Activated T-helper 1 cell treated with anti-CD3 and anti-CD28 coated beads, Interleukin-12 subunit alpha, Interleukin-12 subunit beta, Interleukin-2, Interleukin-4 antibody, amounts not matched to agents 30 ng/mL and 10 ng/mL and 1 ng/mL, durations not matched to agents 14 hours and 24 hours and 36 hours (primary cell): ENCODE measurements at regions of chr1 and their contacts with region 1.

Region 1: DNA sequence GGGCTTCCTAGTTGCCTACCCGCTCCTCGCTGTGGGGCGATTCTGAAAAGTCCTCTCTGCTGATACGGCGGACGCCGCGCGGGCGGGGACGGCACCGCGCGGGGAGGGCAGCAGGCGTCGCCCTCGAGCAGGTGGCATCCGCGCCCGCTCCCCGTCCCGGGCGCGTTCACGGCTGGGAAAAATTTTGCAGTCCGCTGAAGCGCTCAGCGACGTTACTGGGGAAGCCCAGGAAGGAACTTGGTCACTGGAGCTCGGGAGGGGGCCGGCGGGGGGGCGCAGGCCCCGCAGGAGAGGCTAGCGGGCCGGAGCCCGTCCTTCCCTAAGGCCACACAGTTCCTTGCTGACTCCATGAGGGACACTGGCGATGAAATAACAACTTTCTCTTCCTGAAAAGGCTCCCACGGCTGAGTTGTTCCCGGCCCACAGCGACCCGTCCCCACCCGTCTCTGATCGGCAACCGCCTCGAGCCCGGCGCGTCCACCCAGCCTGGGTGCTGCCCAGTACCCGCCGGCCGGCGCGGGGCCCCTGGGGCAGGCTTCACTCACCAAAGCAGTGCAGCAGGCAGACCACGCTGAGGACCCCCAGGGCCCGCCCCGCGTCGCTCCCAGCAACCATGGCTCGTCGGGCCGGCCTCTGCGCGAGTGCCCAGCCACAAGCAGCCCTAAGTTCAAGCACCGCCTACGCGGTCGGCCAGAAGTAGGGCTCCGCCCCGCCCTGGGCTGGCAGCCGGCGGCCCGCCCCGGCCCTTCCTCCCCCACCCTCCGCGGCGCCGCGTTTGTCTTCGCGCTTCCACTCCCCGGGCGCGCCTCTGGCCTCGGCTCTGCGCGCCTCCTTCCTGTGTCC is at the start of gene CD58:
- DNase-seq: peak; percentile 81
- H3K4me3 Mint-ChIP-seq: peak within 1 kb of the TSS; percentile 90
- H3K27ac Mint-ChIP-seq: peak within 1 kb of the TSS; percentile 90
- H3K4me1 Mint-ChIP-seq: peaks cover 74% of the 10 kb centered on the region
- H3K27me3 Mint-ChIP-seq: no peaks in the 10 kb centered on the region
- total RNA-seq, gene CD58: 35.3 and 37.8 TPM in 2 replicates

Region 2: DNA sequence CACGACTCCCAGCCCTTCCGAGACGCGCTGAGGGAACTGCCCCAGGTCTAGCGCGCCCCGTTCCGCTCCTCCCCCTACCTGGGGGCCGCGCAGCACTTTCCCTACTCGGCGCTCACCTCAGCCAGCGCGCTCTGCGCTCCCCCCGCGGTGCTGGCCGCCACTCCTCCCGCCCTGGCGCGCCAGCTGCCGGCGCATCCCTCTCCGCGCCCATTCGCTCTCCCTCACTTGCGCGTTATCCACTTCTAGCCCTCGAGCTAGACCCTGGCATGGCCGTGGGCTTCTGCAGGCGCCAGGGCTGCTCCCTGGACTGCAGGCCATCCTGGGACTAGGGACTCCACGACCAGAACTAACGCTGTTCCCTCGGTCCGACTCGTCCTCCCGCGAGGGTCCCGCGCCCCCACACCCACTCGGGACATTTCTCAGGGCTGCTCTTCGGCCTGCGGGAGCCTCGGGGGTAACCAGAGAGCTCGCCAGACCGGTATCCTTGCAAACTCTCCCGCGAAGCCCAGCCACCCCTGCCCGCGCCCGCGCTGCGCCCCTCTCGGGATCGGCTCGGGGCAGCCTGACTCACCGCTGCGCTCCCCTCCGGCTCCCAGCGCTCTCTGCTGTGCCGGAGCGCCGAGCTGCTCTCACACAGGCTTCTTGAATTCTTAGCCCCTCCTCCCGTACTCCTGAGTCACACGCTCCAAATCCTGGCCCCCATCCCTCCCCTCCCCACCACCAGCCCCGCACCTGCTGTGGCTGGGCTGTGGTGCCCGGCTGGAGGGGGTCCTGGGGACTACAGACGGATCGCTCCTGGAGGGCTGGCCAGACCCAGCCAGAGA is 1232.7 kb before region 1 on chr1 and contains the start of gene NGF:
- intact Hi-C with region 1: no loop called
- DNase-seq: no peak
- H3K4me3 Mint-ChIP-seq: no peak within 1 kb of the TSS
- H3K27ac Mint-ChIP-seq: no peak within 1 kb of the TSS
- H3K4me1 Mint-ChIP-seq: no peaks in the 10 kb centered on the region
- H3K27me3 Mint-ChIP-seq: peaks cover 22% of the 10 kb centered on the region
- total RNA-seq, gene NGF: not detected in 2 replicates

Region 3: GRCh38 chr1:116504308-116505156 is 66.0 kb before region 1 on chr1:
- intact Hi-C with region 1: loop called (anchors 1 kb)
- DNase-seq: peak; percentile 86
- H3K4me3 Mint-ChIP-seq: peak overlapping the region; percentile 3
- H3K27ac Mint-ChIP-seq: peak overlapping the region; percentile 88
- H3K4me1 Mint-ChIP-seq: peaks cover 91% of the 10 kb centered on the region
- H3K27me3 Mint-ChIP-seq: no peaks in the 10 kb centered on the region

Region 4: GRCh38 chr1:116556289-116557006 is 14.1 kb before region 1 on chr1:
- intact Hi-C with region 1: loop called (anchors 1 kb)
- DNase-seq: peak; percentile 67
- H3K4me3 Mint-ChIP-seq: peak overlapping the region; percentile 9
- H3K27ac Mint-ChIP-seq: peak overlapping the region; percentile 77
- H3K4me1 Mint-ChIP-seq: peaks cover 86% of the 10 kb centered on the region
- H3K27me3 Mint-ChIP-seq: no peaks in the 10 kb centered on the region

Region 5: DNA sequence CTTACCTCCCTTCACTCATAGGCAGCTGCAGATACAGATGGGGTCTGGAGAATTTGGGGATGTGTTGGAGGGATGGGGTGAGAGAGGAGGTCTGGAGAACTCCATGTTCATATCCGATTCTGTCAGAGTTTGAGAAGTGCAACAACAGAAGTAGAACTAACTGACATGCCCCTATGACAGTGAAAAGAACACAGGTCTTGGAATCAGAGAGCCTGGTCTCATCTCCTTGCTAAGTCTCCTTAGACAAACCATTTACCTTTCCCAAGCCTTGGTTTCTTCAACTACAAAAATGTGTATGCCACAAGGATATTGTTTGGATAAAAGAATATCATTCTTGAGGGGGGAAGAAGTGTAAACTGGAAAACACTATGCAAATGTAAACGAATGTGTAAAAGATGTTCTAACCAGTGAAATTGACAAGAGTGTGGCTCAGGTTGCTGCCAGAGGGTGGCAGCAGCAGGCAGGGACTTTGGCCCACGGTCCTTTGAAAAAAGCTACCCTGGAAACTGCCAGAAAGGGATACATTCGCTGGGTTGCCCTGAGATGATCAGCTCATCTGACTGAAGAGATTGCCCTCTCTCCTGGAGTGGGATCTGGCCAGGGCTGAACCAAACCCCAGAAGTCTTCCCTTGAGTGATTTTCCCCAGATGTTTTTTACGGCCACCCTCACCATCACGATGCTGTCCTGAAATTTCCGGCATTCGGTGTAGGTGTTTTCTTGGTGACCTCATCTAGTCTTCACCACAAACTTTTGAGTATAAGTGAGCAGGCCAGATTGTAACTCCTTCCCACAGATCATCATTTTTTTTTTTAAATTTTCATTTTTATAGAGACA is 166.7 kb after region 1 on chr1:
- intact Hi-C with region 1: loop called (anchors 1 kb)
- DNase-seq: peak; percentile 70
- H3K4me3 Mint-ChIP-seq: peak overlapping the region; percentile 66
- H3K27ac Mint-ChIP-seq: peak overlapping the region; percentile 99
- H3K4me1 Mint-ChIP-seq: peaks cover 79% of the 10 kb centered on the region
- H3K27me3 Mint-ChIP-seq: no peaks in the 10 kb centered on the region

Region 6: DNA sequence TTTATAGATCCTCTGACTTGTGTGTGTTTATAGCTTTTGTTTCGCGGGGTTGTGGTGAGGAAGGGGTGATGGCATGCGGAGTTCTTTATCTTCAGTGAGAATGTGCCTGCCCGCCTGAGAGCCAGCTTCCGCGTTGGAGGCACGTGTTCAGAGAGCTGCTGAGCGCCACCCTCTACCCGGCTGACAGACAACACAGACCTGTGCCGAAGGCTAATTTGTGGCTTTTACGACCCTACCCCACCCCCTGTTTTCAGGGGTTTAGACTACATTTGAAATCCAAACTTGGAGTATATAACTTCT is 416.6 kb after region 1 on chr1:
- intact Hi-C with region 1: loop called (anchors 2 kb)
- DNase-seq: peak; percentile 48
- H3K4me3 Mint-ChIP-seq: peak overlapping the region; percentile 80
- H3K27ac Mint-ChIP-seq: peak overlapping the region; percentile 92
- H3K4me1 Mint-ChIP-seq: peaks cover 49% of the 10 kb centered on the region
- H3K27me3 Mint-ChIP-seq: no peaks in the 10 kb centered on the region

Region 7: GRCh38 chr1:117128323-117129079 is 557.9 kb after region 1 on chr1:
- intact Hi-C with region 1: loop called (anchors 1 kb)
- DNase-seq: no peak
- H3K4me3 Mint-ChIP-seq: no peak overlapping the region
- H3K27ac Mint-ChIP-seq: no peak overlapping the region
- H3K4me1 Mint-ChIP-seq: no peaks in the 10 kb centered on the region
- H3K27me3 Mint-ChIP-seq: peaks cover 17% of the 10 kb centered on the region